Colonic mucosa (tissue), 4 donors: ENCODE measurements at regions of chr11 and their contacts with region 1.

Region 1: GRCh38 chr11:33829433-33830141 is 55.3 kb upstream of the FBXO3 start:
- DNase-seq: peak; percentile 68
- H3K4me3 ChIP-seq: peak overlapping the region; percentile 27
- H3K27ac ChIP-seq: no peak overlapping the region
- H3K4me1 ChIP-seq: no peaks in the 10 kb centered on the region
- H3K27me3 ChIP-seq: peaks cover 22% of the 10 kb centered on the region
- CTCF ChIP-seq: peak; percentile 61

Region 2: DNA sequence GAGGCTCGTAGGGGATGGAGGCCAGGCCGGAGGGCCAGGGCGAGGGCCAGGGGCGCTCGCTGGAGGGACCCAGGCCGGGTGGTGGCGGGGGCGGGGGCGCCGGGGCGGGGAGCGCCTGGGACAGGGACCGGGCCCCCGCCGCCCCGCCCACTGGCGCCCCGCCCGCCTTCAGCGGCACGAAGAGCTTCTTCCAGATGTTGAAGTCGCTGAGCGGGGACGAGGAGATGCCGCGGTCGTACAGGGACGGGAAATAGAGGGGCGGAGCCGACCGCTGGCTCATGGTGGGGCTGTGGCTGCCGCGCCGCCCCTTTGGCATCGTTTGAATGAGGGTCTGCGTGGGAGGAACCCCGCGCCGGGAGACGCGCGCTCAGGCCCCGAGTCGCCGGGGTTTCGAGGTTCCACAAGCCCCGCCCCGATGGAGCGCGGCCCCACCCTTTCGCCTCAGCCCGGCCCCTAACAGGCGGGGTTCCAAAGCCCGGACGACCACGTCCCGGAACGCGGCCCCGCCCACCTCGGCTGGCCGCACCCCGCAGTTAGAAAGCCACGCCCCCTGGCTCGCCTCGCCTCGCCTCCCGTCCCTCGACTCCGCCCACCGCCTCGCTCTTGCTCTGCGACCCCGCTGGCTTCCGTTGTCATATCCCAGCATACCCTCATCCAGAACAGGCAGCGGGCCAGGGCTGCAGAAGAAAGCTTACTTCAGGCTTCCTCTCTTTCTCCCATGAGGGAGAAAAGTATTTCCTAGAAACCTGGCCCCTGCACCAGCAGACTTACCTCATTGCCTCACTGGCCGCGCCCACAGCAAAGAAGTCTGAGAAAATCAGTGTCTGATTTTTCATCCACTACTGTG is 128.9 kb before region 1 on chr11 and contains the start of gene C11orf91:
- intact Hi-C with region 1: no loop called
- DNase-seq: peak; percentile 98
- H3K4me3 ChIP-seq: peak within 1 kb of the TSS; percentile 45
- H3K27ac ChIP-seq: peak within 1 kb of the TSS; percentile 79
- H3K4me1 ChIP-seq: peaks cover 13% of the 10 kb centered on the region
- H3K27me3 ChIP-seq: no peaks in the 10 kb centered on the region
- CTCF ChIP-seq: no peak
- total RNA-seq, gene C11orf91: not detected

Region 3: GRCh38 chr11:33753304-33753967 is 76.2 kb before region 1 on chr11:
- intact Hi-C with region 1: no loop called
- DNase-seq: no peak
- H3K4me3 ChIP-seq: no peak overlapping the region
- H3K27ac ChIP-seq: no peak overlapping the region
- H3K4me1 ChIP-seq: no peaks in the 10 kb centered on the region
- H3K27me3 ChIP-seq: no peaks in the 10 kb centered on the region
- CTCF ChIP-seq: no peak

Region 4: DNA sequence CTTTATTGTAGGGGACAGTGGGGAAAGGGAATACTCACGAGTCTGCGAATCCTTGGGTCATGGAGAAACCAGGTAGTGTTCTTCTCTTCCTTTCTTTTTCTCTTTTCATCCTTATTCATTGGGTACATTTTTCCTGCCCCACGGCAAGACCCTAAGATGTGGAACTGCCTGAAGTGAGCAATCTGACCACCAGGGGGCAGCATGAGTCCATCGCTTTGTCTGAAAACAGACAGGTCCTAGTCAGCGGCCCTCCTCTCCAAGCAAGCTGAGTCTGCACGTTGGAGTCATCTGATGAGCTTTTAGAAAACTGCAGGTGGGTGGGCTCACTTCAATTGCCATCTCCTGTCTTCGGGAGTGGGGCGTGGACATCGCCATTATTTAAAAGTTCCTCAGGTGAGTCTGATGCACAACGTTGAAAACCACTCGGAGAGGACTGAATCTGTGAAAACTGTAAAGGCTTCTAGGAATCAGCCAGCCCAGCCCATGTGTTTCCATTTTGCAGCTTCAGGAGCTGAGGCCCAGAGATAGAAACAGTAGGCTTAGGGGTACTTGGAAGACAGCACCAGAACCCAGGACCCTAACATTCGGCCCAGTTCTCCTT is 21.3 kb before region 1 on chr11:
- intact Hi-C with region 1: loop called (anchors 2 kb)
- DNase-seq: peak; percentile 86
- H3K4me3 ChIP-seq: no peak overlapping the region
- H3K27ac ChIP-seq: no peak overlapping the region
- H3K4me1 ChIP-seq: no peaks in the 10 kb centered on the region
- H3K27me3 ChIP-seq: no peaks in the 10 kb centered on the region
- CTCF ChIP-seq: peak; percentile 73